Heart left ventricle (tissue), 16 donors: ENCODE measurements at regions of chrX and their contacts with region 1.

Region 1: DNA sequence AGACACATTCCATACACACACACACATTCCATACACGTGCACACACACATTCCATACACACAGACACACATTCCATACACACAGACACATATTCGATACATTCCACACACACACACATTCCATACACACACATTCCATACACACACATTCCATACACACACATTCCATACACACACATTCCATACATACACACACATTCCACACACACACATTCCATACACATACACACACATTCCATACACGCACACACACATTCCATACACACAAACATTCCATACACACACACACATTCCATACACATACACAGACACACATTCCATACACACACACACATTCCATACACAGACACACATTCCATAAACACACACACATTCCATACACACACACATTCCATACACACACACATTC is 13.7 kb downstream of the LINC00632 start:
- DNase-seq: no peak
- ATAC-seq: no peak
- H3K4me3 ChIP-seq: no peak overlapping the region
- H3K27ac ChIP-seq: no peak overlapping the region
- H3K4me1 ChIP-seq: no peaks in the 10 kb centered on the region
- H3K27me3 ChIP-seq: no peaks in the 10 kb centered on the region
- CTCF ChIP-seq: no peak
- POLR2A ChIP-seq: no peak

Region 2: DNA sequence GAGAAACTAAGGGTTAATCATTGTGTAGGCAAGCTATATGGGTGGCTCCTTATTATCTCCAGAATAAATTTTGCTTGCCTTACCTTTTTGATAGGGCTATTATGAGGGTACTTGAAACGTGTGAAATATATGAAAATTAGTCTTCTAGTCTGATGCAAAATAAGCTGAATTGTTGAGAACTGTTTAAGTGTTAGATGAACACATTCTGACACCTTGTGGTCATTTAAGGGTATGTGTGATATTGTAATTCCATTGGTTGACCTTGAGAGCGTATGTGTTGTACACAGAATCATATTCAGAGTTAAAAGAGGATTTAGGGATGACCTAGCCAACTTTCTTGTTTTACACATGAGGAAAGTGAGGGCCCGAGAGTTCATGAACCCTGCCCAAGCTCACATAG is 58.3 kb before region 1 on chrX:
- intact Hi-C with region 1: loop called in 1 of 10 experiments (anchors 10 kb)
- DNase-seq: no peak
- ATAC-seq: no peak
- H3K4me3 ChIP-seq: no peak overlapping the region
- H3K27ac ChIP-seq: no peak overlapping the region
- H3K4me1 ChIP-seq: no peaks in the 10 kb centered on the region
- H3K27me3 ChIP-seq: peaks cover 0 to 10% (median 0%) of the 10 kb centered on the region in 9 donors
- CTCF ChIP-seq: peak in 9 of 12 donors; percentile 10 to 39 (median 23)
- POLR2A ChIP-seq: no peak

Region 3: GRCh38 chrX:140766024-140766611 is 42.9 kb after region 1 on chrX:
- intact Hi-C with region 1: no loop called
- DNase-seq: peak in 3 of 5 donors; percentile 10 to 31 (median 16)
- ATAC-seq: peak in 1 of 4 donors; percentile 51
- H3K4me3 ChIP-seq: peak overlapping the region in 7 of 12 donors; percentile 37 to 59 (median 50)
- H3K27ac ChIP-seq: no peak overlapping the region
- H3K4me1 ChIP-seq: no peaks in the 10 kb centered on the region
- H3K27me3 ChIP-seq: peaks cover 0 to 35% (median 0%) of the 10 kb centered on the region in 9 donors
- CTCF ChIP-seq: peak; percentile 56 to 84 (median 70)
- POLR2A ChIP-seq: no peak